Heart left ventricle (tissue), 16 donors: ENCODE measurements at regions of chr2 and their contacts with region 1.

Region 1: GRCh38 chr2:14587139-14587538 is 45.4 kb upstream of the LRATD1 start:
- DNase-seq: no peak
- ATAC-seq: no peak
- H3K4me3 ChIP-seq: no peak overlapping the region
- H3K27ac ChIP-seq: no peak overlapping the region
- H3K4me1 ChIP-seq: no peaks in the 10 kb centered on the region
- H3K27me3 ChIP-seq: no peaks in the 10 kb centered on the region
- CTCF ChIP-seq: no peak
- POLR2A ChIP-seq: no peak

Region 2: GRCh38 chr2:14535190-14535589 is 51.9 kb before region 1 on chr2:
- intact Hi-C with region 1: loop called in 1 of 10 experiments (anchors 10 kb)
- DNase-seq: peak in 1 of 5 donors; percentile 21
- ATAC-seq: no peak
- H3K4me3 ChIP-seq: no peak overlapping the region
- H3K27ac ChIP-seq: no peak overlapping the region
- H3K4me1 ChIP-seq: peaks cover 0 to 8% (median 0%) of the 10 kb centered on the region in 12 donors
- H3K27me3 ChIP-seq: no peaks in the 10 kb centered on the region
- CTCF ChIP-seq: no peak
- POLR2A ChIP-seq: no peak

Region 3: GRCh38 chr2:14673351-14673875 is 86.3 kb after region 1 on chr2:
- intact Hi-C with region 1: no loop called
- DNase-seq: no peak
- ATAC-seq: no peak
- H3K4me3 ChIP-seq: no peak overlapping the region
- H3K27ac ChIP-seq: no peak overlapping the region
- H3K4me1 ChIP-seq: peaks cover 0 to 2% (median 0%) of the 10 kb centered on the region in 12 donors
- H3K27me3 ChIP-seq: no peaks in the 10 kb centered on the region
- CTCF ChIP-seq: no peak
- POLR2A ChIP-seq: no peak